Activated CD8-positive, alpha-beta memory T cell treated with anti-CD3 and anti-CD28 coated beads, Interleukin-2, amount 10 ng/mL, durations not matched to agents 7 days and 5 days (primary cell): ENCODE measurements at regions of chr6 and their contacts with region 1.

Region 1: GRCh38 chr6:110873981-110874879 is at the start of gene AMD1:
- DNase-seq: peak; percentile 97
- ATAC-seq: peak; percentile 71
- H3K4me3 Mint-ChIP-seq: peak within 1 kb of the TSS; percentile 88
- H3K27ac Mint-ChIP-seq: peak within 1 kb of the TSS; percentile 99
- H3K4me1 Mint-ChIP-seq: peaks cover 28% of the 10 kb centered on the region
- H3K27me3 Mint-ChIP-seq: no peaks in the 10 kb centered on the region
- total RNA-seq, gene AMD1: 71.2 to 85.1 TPM

Region 2: DNA sequence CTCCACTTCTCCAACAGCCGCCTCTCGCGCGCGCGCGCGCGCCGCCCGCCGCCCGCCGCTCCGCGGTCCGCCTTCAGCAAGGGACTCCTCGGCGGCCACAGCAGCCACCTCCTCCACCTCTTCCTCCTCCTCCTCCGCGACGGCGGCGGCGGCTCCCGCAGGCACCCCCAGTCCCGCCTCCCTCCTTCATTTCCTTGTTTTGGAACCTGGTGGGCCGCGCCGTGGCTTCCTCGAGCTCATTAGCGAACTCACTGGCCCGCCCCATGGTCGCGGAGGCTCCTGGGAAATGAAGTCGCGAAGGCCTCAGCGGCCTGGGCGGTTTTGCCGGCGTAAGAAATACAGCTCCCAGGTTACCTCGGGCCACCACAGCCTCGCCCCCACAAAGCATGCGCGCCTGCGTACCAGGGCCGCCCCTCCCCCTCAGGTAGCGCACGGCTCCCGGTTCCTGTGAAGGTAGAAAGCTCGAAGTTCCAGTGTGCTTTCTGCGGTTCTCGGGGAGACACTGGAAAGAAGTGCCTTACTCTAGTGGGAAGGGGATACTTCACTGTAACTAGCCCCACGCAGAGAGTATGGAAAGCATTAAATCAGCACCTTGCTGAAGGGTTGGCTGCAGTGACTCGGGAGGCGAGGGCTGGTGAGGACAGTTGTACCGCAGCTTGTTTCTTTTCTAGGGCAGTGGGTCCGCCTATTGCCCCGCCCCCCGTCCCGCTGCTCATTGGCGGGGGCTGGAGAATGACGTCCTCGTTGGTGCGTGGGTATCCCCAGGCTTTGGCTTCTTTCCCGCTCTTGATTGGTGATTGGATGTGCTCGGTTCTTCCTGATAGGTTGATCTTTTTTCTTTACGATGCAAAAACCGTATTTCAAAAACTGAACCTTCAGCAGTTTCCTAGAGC is 58.8 kb before region 1 on chr6 and contains the start of gene CDK19:
- CTCF ChIA-PET with region 1: interaction called, 47 read pairs
- DNase-seq: peak; percentile 99
- ATAC-seq: peak; percentile 83
- H3K4me3 Mint-ChIP-seq: peak within 1 kb of the TSS; percentile 97
- H3K27ac Mint-ChIP-seq: peak within 1 kb of the TSS; percentile 100
- H3K4me1 Mint-ChIP-seq: peaks cover 48% of the 10 kb centered on the region
- H3K27me3 Mint-ChIP-seq: no peaks in the 10 kb centered on the region
- total RNA-seq, gene CDK19: 27.8 to 29.4 TPM

Region 3: DNA sequence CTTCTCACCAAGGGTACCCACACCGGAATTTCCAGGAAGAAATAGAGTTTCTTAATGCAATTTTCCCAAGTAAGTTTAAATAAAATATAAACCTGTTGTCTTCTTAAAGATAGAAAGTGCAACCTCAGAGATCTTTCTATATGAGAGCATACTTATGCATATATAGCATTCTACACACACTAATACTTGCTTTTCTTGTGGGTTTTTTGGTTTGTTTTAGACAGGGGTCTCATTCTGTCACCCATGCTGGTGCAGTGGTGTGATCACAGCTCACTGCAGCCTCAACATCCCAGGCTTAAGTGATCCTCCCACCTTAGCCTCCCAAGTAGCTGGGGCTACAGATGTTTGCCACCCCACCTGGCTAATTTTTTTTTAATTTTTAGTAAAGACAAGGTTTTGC is 16.1 kb after region 1 on chr6:
- CTCF ChIA-PET with region 1: interaction called, 15 read pairs
- DNase-seq: no peak
- ATAC-seq: peak; percentile 40
- H3K4me3 Mint-ChIP-seq: no peak overlapping the region
- H3K27ac Mint-ChIP-seq: no peak overlapping the region
- H3K4me1 Mint-ChIP-seq: peaks cover 29% of the 10 kb centered on the region
- H3K27me3 Mint-ChIP-seq: no peaks in the 10 kb centered on the region